ENCODE measurements at regions of chr2 and their contacts with region 1.

Region 1: DNA sequence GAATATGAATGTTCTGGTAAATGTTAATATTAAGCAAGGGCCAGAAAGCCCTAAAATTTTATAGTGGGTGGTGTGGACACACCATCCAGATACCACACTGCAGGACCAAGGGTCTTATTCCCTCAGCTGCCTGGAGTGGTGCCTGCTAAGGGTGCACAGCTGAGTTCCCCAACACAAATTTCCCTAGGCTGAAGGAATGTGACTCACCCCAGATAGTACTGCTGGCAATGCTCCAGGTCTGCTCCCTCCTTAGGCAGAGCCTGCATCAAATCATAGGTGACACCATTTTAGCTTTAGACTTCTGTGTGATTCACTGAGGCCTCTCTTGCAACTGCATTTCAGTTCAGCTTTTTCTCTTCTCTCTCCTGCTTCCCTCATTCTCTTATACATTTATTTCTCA is 321.1 kb downstream of the SATB2 start:
- DNase-seq: no peak
- H3K4me3 ChIP-seq: no peak overlapping the region
- H3K27ac ChIP-seq: no peak overlapping the region
- H3K4me1 ChIP-seq: no peaks in the 10 kb centered on the region
- H3K27me3 ChIP-seq: no peaks in the 10 kb centered on the region
- CTCF ChIP-seq: no peak
- POLR2A ChIP-seq: no peak

Region 2: GRCh38 chr2:199495149-199495548 is 358.5 kb after region 1 on chr2:
- intact Hi-C with region 1: loop called (anchors 10 kb)
- DNase-seq: no peak
- H3K4me3 ChIP-seq: no peak overlapping the region
- H3K27ac ChIP-seq: no peak overlapping the region
- H3K4me1 ChIP-seq: no peaks in the 10 kb centered on the region
- H3K27me3 ChIP-seq: no peaks in the 10 kb centered on the region
- CTCF ChIP-seq: no peak
- POLR2A ChIP-seq: no peak

Measured in thyroid gland (tissue), 4 donors.